Sciatic nerve (tissue), 2 donors: ENCODE measurements at regions of chr3 and their contacts with region 1.

Region 1: GRCh38 chr3:71657831-71658530 is 67.2 kb downstream of the EIF4E3 start:
- DNase-seq: peak; percentile 75
- ATAC-seq: peak; percentile 76

Region 2: DNA sequence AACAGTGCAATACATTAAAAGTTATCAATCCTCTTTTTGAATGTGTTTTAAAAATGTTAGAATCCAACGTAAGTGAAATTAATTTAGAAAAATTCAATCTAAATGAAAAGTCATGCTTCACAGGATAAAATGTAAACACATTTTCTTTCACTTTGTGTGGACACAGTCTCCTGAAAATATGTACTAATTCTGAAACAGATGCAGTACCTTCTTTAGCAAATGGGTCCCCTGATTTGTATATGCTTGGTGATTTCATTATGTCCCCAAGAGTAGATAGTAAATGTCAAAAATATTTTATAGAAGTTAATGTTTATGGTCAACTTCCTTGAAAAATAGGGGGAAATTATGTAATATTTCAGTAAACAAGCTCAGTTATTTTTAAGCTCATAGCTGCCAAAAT is 103.3 kb before region 1 on chr3:
- intact Hi-C with region 1: no loop called
- DNase-seq: no peak
- ATAC-seq: no peak

Region 3: DNA sequence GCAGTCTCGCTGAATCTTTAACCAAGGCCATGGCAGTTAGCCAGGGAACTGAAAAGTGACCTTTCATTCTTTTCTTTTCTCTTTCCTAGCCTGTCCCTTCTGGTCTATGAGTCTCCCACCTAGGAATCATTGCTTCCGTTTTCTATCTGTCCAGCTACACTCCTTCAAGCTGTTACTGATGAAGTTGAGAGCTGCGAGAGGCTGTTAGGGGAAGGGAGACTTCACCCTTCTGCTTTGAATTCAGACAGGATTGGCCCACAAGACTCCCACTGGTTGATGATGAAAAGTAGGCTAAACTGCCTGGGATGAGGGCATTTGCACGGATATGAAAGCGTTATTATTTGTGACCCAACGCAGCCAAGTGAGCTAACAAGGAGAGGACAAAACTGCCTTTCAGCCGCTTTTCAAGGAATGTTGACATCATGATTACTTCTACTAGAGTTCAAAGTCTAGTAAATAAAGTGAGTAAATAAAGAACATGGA is 37.1 kb after region 1 on chr3:
- intact Hi-C with region 1: loop called (anchors 1 kb)
- DNase-seq: no peak
- ATAC-seq: peak; percentile 47